WTC11 (cell line): ENCODE measurements at regions of chr2 and their contacts with region 1.

Region 1: DNA sequence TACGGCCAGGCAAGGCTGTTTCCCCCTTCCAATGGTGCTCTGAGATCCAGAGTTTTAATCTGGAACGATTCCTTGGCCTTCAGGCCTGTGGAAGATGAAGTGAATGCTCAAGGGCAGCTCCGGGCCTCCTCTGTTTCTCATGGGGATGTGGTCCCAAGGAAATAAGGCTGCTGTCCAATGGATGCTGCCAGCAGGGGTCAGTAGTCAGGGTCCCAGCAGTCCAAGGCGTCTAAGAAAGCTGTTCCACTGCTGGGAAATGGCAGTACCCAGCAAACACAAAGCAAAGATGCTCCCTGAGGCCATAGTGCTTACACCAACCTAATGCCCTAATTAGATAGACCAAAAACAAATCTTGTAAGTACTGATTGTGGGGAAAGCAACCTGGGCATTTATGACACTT is 12.5 kb downstream of the NMS start:
- DNase-seq: peak; percentile 33
- ATAC-seq: peak; percentile 59
- H3K4me3 Mint-ChIP-seq: no peak overlapping the region
- H3K27ac Mint-ChIP-seq: no peak overlapping the region
- H3K4me1 Mint-ChIP-seq: peaks cover 3% of the 10 kb centered on the region; the same call in 1 of the 2 replicates
- H3K27me3 Mint-ChIP-seq: no peaks in the 10 kb centered on the region
- CTCF ChIP-seq: no peak

Region 2: DNA sequence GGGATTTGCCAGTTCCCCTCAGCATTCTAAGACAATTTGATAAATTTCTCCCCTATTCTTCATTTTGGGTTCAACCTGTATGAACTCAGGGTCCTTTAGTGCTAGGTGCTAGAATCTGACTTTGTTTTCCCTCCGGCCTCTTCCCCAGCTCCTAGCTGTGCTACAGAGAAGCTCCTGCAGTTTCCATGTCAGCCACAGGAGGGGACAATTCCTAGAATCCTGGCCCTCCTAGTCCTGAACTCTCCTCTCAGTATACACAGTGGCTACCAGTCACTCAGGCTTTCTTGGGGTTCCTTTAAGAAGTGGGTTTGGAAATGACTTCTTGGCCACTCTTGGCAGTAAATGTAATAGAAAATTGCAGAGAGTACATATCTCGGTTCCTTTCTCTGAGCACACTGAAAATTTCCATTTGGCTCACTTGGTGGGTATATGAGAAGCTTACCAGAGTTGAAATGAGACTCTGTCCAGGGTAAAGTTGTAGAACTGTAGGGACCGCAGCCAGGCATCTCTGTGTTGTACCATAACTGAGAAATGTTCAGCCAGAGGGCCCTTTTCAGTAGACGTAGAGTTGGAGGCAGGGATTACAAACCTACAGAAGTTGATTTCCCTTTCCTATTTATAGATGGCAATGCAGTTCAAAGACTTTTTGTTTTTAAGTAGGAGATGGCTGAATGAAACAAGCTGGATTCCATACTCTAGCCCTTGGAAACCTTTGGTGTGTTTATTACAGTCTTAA is 60.3 kb before region 1 on chr2:
- CTCF ChIA-PET with region 1: interaction called, 10 read pairs
- POLR2A ChIA-PET with region 1: no interaction called
- DNase-seq: peak; percentile 60
- ATAC-seq: peak; percentile 91
- H3K4me3 Mint-ChIP-seq: no peak overlapping the region
- H3K27ac Mint-ChIP-seq: no peak overlapping the region
- H3K4me1 Mint-ChIP-seq: peaks cover 14% of the 10 kb centered on the region
- H3K27me3 Mint-ChIP-seq: no peaks in the 10 kb centered on the region
- CTCF ChIP-seq: 0 out of 2 replicates have a peak, but pooled peaks have one; percentile 25